ENCODE measurements at regions of chr11 and their contacts with region 1.

Region 1: GRCh38 chr11:115548878-115549528 is 44.8 kb upstream of the CADM1 start:
- DNase-seq: no peak
- ATAC-seq: no peak
- H3K4me3 ChIP-seq: no peak overlapping the region
- H3K27ac ChIP-seq: no peak overlapping the region
- H3K4me1 ChIP-seq: peaks cover 0 to 5% (median 0%) of the 10 kb centered on the region in 9 donors
- H3K27me3 ChIP-seq: peaks cover 0 to 4% (median 0%) of the 10 kb centered on the region in 7 donors
- CTCF ChIP-seq: no peak

Region 2: GRCh38 chr11:115564851-115565250 is 15.8 kb after region 1 on chr11:
- intact Hi-C with region 1: loop called in 1 of 10 experiments (anchors 1 kb)
- DNase-seq: no peak
- ATAC-seq: no peak
- H3K4me3 ChIP-seq: no peak overlapping the region
- H3K27ac ChIP-seq: no peak overlapping the region
- H3K4me1 ChIP-seq: no peaks in the 10 kb centered on the region
- H3K27me3 ChIP-seq: peaks cover 0 to 8% (median 3%) of the 10 kb centered on the region in 7 donors
- CTCF ChIP-seq: no peak

Region 3: GRCh38 chr11:115606498-115607220 is 57.7 kb after region 1 on chr11:
- intact Hi-C with region 1: loop called in 1 of 10 experiments (anchors 10 kb)
- DNase-seq: peak; percentile 31 to 74
- ATAC-seq: peak; percentile 57 to 87 (median 72)
- H3K4me3 ChIP-seq: no peak overlapping the region
- H3K27ac ChIP-seq: peak overlapping the region in 9 of 10 donors; percentile 22 to 86 (median 74)
- H3K4me1 ChIP-seq: peaks cover 0 to 27% (median 11%) of the 10 kb centered on the region in 9 donors
- H3K27me3 ChIP-seq: peaks cover 0 to 18% (median 0%) of the 10 kb centered on the region in 7 donors
- CTCF ChIP-seq: no peak